ENCODE measurements at regions of chr1 and their contacts with region 1.

Region 1: GRCh38 chr1:236759252-236759859 is 35.7 kb upstream of the MTR start:
- DNase-seq: no peak
- ATAC-seq: no peak
- H3K4me3 Mint-ChIP-seq: no peak overlapping the region
- H3K27ac Mint-ChIP-seq: no peak overlapping the region
- H3K4me1 Mint-ChIP-seq: no peaks in the 10 kb centered on the region
- H3K27me3 Mint-ChIP-seq: peaks cover 7% of the 10 kb centered on the region
- CTCF ChIP-seq: peak; percentile 35

Region 2: DNA sequence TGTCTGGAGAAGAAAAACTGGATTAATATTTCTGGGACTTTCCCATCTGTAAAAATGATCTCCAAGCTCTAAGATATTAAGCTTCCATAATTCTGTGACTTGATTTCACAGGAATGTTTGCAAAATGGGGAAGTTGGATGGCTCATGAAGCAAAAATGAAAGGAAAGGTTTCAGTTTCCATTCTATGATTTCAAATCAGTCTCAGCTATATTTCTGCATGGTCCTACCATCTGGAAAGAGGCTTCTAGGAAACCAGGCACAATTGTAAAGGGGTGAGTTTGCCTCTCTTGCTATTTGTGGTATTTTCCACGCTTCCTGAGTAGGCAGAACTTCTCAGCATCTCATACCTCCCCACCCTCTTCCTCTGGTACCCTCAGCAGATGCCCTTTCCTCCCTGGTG is 95.4 kb before region 1 on chr1:
- CTCF ChIA-PET with region 1: no interaction called
- POLR2A ChIA-PET with region 1: no interaction called
- intact Hi-C with region 1: no loop called
- DNase-seq: no peak
- ATAC-seq: no peak
- H3K4me3 Mint-ChIP-seq: no peak overlapping the region
- H3K27ac Mint-ChIP-seq: no peak overlapping the region
- H3K4me1 Mint-ChIP-seq: peaks cover 5% of the 10 kb centered on the region
- H3K27me3 Mint-ChIP-seq: peaks cover 2% of the 10 kb centered on the region
- CTCF ChIP-seq: no peak

Region 3: DNA sequence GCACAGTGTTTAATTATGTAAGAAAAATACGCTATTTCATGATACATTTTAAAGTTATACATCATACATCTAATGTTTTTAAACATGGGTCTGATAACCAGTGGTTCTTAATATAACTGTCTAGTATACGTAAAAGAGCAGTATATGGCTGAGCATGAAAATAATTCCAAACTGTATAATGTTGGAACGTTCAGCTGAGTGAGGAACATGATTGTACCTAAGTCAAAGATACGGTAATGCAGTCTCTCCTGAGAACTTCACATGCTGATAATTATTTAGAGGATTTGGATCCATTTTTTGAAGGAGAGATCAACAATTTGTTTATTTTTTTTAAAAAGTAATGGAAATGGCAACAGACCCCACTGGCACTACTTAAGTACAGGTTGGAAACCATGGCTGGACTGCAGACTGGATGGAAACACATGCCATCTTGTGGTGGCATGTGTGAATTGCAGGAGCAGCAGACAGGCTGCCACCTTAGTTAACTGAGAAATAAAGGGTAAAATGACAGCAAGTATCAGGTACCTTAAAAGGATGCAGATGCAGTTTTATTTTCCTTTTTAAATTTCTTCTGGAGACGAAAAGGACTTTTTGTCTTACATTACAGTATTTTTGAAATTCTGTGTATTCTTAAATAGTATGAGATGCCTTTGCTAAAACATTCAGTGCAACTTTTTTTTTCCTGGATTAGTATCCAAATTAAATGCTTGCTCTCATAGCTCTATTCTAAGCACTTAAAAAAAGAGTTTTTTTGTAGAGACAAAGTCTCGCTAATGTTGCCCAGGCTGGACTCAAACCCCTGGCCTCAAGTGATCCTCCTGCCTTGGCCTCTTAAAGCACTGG is 109.5 kb after region 1 on chr1:
- CTCF ChIA-PET with region 1: interaction called, 5 read pairs
- POLR2A ChIA-PET with region 1: no interaction called
- intact Hi-C with region 1: loop called (anchors 1 kb)
- DNase-seq: no peak
- ATAC-seq: peak; percentile 31
- H3K4me3 Mint-ChIP-seq: no peak overlapping the region
- H3K27ac Mint-ChIP-seq: no peak overlapping the region
- H3K4me1 Mint-ChIP-seq: no peaks in the 10 kb centered on the region
- H3K27me3 Mint-ChIP-seq: no peaks in the 10 kb centered on the region
- CTCF ChIP-seq: peak; percentile 84

Region 4: GRCh38 chr1:237386362-237387143 is 627.2 kb after region 1 on chr1:
- CTCF ChIA-PET with region 1: interaction called, 5 read pairs
- POLR2A ChIA-PET with region 1: no interaction called
- intact Hi-C with region 1: loop called (anchors 5 kb)
- DNase-seq: no peak
- ATAC-seq: no peak
- H3K4me3 Mint-ChIP-seq: no peak overlapping the region
- H3K27ac Mint-ChIP-seq: no peak overlapping the region
- H3K4me1 Mint-ChIP-seq: no peaks in the 10 kb centered on the region
- H3K27me3 Mint-ChIP-seq: no peaks in the 10 kb centered on the region
- CTCF ChIP-seq: no peak

Measured in activated B cell treated with CpG ODN at 0.5 μM for 24 hours (primary cell).